B cell (primary cell): ENCODE measurements at regions of chr6 and their contacts with region 1.

Region 1: GRCh38 chr6:36885461-36886401 is at the start of gene C6orf89:
- DNase-seq: peak; percentile 98
- ATAC-seq: peak; percentile 99
- H3K4me3 ChIP-seq: peak within 1 kb of the TSS; percentile 68 to 89 (median 80)
- H3K4me3 Mint-ChIP-seq: peak within 1 kb of the TSS; percentile 90
- H3K27ac ChIP-seq: peak within 1 kb of the TSS; percentile 82 to 92
- H3K27ac Mint-ChIP-seq: peak within 1 kb of the TSS; percentile 92
- H3K4me1 ChIP-seq: peaks cover 17 to 22% of the 10 kb centered on the region in 2 donors
- H3K4me1 Mint-ChIP-seq: peaks cover 32% of the 10 kb centered on the region
- H3K27me3 ChIP-seq: no peaks in the 10 kb centered on the region
- H3K27me3 Mint-ChIP-seq: no peaks in the 10 kb centered on the region
- CTCF ChIP-seq: peak; percentile 86
- total RNA-seq, gene C6orf89: 34.2 and 35.3 TPM in 2 replicates

Region 2: DNA sequence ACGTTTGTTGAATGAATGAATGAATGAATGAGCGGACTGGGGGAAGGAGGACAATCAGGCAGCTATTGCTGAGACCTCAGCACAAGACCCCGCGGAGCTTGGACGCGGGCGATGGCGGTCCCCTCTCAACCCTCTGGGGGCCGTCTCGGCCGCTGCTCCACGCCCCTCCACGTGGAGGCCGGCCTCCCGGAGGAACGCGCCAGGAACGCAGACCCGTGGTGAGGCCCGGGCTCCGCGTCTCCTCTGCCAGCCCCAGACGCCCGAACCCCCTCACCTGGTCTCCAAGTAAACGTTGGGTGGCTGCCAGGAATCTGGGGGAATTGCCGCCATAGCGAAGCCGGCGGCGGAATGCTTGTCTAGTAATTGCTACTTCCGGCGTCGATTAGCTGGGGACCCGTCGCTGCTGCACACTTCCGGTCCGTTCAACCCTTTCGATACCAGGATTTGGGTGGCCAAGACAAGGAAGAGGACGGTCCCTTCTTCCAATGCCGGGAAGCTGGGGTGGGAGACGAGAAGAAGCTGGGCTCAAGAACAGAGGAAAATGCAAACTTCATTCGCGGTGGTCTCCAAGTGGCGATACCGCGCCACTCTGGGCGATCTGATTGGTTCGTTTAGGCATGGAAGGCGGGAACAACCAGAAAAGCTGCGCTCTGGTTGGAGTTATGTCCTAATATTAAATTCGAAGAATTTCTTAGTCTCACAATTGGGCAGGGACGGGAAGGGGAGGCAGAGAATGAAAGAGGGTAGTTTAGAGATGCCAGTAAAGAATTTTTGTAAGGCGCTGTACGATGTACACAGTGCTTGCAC is 11.1 kb before region 1 on chr6 and contains the start of gene PPIL1:
- CTCF ChIA-PET with region 1: interaction called, 72 read pairs
- POLR2A ChIA-PET with region 1: interaction called, 24 read pairs
- intact Hi-C with region 1: loop called (anchors 1 kb)
- DNase-seq: peak; percentile 96
- ATAC-seq: peak; percentile 93
- H3K4me3 ChIP-seq: peak within 1 kb of the TSS; percentile 73 to 100 (median 99)
- H3K4me3 Mint-ChIP-seq: peak within 1 kb of the TSS; percentile 99
- H3K27ac ChIP-seq: peak within 1 kb of the TSS; percentile 63 to 89
- H3K27ac Mint-ChIP-seq: peak within 1 kb of the TSS; percentile 97
- H3K4me1 ChIP-seq: peaks cover 12 to 15% of the 10 kb centered on the region in 2 donors
- H3K4me1 Mint-ChIP-seq: peaks cover 32% of the 10 kb centered on the region
- H3K27me3 ChIP-seq: peaks cover 0 to 3% (median under 1%) of the 10 kb centered on the region in 4 experiments
- H3K27me3 Mint-ChIP-seq: no peaks in the 10 kb centered on the region
- CTCF ChIP-seq: no peak
- total RNA-seq, gene PPIL1: 7.0 and 10.5 TPM in 2 replicates

Region 3: DNA sequence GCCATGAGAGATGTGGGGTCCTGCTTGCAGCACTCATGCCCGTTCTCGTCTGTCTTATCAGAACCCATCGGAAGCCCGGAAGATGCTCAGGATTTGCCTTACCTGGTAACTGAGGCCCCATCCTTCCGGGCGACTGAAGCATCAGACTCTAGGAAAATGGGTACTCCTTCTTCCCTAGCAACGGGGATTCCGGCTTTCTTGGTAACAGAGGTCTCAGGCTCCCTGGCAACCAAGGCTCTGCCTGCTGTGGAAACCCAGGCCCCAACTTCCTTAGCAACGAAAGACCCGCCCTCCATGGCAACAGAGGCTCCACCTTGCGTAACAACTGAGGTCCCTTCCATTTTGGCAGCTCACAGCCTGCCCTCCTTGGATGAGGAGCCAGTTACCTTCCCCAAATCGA is 77.1 kb after region 1 on chr6:
- CTCF ChIA-PET with region 1: interaction called, 3 read pairs
- POLR2A ChIA-PET with region 1: no interaction called
- intact Hi-C with region 1: loop called (anchors 1 kb)
- DNase-seq: peak; percentile 89
- ATAC-seq: peak; percentile 75
- H3K4me3 ChIP-seq: peak overlapping the region in 4 of 5 experiments; percentile 10 to 25 (median 20)
- H3K4me3 Mint-ChIP-seq: peak overlapping the region; percentile 75
- H3K27ac ChIP-seq: peak overlapping the region; percentile 58 to 61
- H3K27ac Mint-ChIP-seq: peak overlapping the region; percentile 92
- H3K4me1 ChIP-seq: peaks cover 22 to 30% of the 10 kb centered on the region in 2 donors
- H3K4me1 Mint-ChIP-seq: peaks cover 35% of the 10 kb centered on the region
- H3K27me3 ChIP-seq: no peaks in the 10 kb centered on the region
- H3K27me3 Mint-ChIP-seq: no peaks in the 10 kb centered on the region
- CTCF ChIP-seq: no peak

Region 4: GRCh38 chr6:36979347-36979742 is 93.6 kb after region 1 on chr6:
- CTCF ChIA-PET with region 1: interaction called, 12 read pairs
- POLR2A ChIA-PET with region 1: no interaction called
- intact Hi-C with region 1: no loop called
- DNase-seq: peak; percentile 42
- ATAC-seq: no peak
- H3K4me3 ChIP-seq: no peak overlapping the region
- H3K4me3 Mint-ChIP-seq: no peak overlapping the region
- H3K27ac ChIP-seq: no peak overlapping the region
- H3K27ac Mint-ChIP-seq: peak overlapping the region; percentile 47
- H3K4me1 ChIP-seq: peaks cover 16 to 17% of the 10 kb centered on the region in 2 donors
- H3K4me1 Mint-ChIP-seq: peaks cover 37% of the 10 kb centered on the region
- H3K27me3 ChIP-seq: no peaks in the 10 kb centered on the region
- H3K27me3 Mint-ChIP-seq: no peaks in the 10 kb centered on the region
- CTCF ChIP-seq: no peak

Region 5: GRCh38 chr6:36985808-36986703 is 100.3 kb after region 1 on chr6 and contains the start of gene MTCH1:
- CTCF ChIA-PET with region 1: interaction called, 4 read pairs
- POLR2A ChIA-PET with region 1: interaction called, 5 read pairs
- intact Hi-C with region 1: loop called (anchors 5 kb)
- DNase-seq: peak; percentile 96
- ATAC-seq: peak; percentile 88
- H3K4me3 ChIP-seq: peak within 1 kb of the TSS; percentile 66 to 98 (median 88)
- H3K4me3 Mint-ChIP-seq: peak within 1 kb of the TSS; percentile 96
- H3K27ac ChIP-seq: peak within 1 kb of the TSS; percentile 53 to 89
- H3K27ac Mint-ChIP-seq: peak within 1 kb of the TSS; percentile 98
- H3K4me1 ChIP-seq: peaks cover 33 to 35% of the 10 kb centered on the region in 2 donors
- H3K4me1 Mint-ChIP-seq: peaks cover 24% of the 10 kb centered on the region
- H3K27me3 ChIP-seq: no peaks in the 10 kb centered on the region
- H3K27me3 Mint-ChIP-seq: no peaks in the 10 kb centered on the region
- CTCF ChIP-seq: no peak
- total RNA-seq, gene MTCH1: 150 and 160 TPM in 2 replicates

Region 6: GRCh38 chr6:37177077-37177934 is 291.6 kb after region 1 on chr6:
- CTCF ChIA-PET with region 1: interaction called, 11 read pairs
- POLR2A ChIA-PET with region 1: no interaction called
- intact Hi-C with region 1: loop called (anchors 1 kb)
- DNase-seq: peak; percentile 86
- ATAC-seq: peak; percentile 74
- H3K4me3 ChIP-seq: peak overlapping the region in 2 of 5 experiments; percentile 12 to 25
- H3K4me3 Mint-ChIP-seq: peak overlapping the region; percentile 80
- H3K27ac ChIP-seq: no peak overlapping the region
- H3K27ac Mint-ChIP-seq: peak overlapping the region; percentile 83
- H3K4me1 ChIP-seq: peaks cover 56 to 58% of the 10 kb centered on the region in 2 donors
- H3K4me1 Mint-ChIP-seq: peaks cover 60% of the 10 kb centered on the region
- H3K27me3 ChIP-seq: no peaks in the 10 kb centered on the region
- H3K27me3 Mint-ChIP-seq: no peaks in the 10 kb centered on the region
- CTCF ChIP-seq: peak; percentile 36

Region 7: DNA sequence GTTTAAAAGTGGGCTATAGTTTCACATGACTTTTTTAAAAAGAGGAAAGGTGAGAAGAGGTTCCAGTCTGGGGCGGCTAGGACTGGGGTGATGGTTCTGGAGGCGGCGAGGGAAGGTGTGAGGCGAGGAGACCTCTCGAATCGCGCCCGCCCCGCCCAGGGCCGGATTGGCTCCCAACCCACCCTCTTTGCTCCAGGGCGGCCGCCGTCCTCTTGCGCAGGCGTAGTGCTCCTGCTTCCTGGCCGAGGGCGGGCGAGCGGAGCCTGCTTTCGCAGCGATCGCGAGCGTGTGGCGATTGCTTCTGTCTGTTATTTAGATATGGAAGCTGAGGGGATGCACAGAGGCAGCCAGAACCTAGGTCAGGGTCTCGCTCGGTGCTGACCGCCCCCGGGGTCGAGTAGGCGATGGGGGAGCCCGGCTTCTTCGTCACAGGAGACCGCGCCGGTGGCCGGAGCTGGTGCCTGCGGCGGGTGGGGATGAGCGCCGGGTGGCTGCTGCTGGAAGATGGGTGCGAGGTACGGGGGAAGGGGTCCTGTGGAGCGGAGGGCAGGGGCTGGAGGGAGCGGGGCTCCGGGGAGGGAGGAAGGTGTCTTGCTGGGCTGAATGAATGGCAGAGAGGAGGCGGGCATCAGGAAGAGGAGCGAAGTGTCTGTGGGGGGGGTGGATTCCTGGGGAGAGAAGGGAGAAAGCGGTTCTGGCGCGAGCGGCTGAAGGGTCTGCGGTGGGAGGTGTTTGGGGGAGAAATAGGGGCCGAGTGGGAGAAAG is 468.2 kb after region 1 on chr6 and contains the start of gene RNF8:
- CTCF ChIA-PET with region 1: no interaction called
- POLR2A ChIA-PET with region 1: no interaction called
- intact Hi-C with region 1: loop called (anchors 5 kb)
- DNase-seq: peak; percentile 90
- ATAC-seq: peak; percentile 98
- H3K4me3 ChIP-seq: peak within 1 kb of the TSS; percentile 44 to 98 (median 92)
- H3K4me3 Mint-ChIP-seq: peak within 1 kb of the TSS; percentile 96
- H3K27ac ChIP-seq: peak within 1 kb of the TSS; percentile 34 to 83
- H3K27ac Mint-ChIP-seq: peak within 1 kb of the TSS; percentile 87
- H3K4me1 ChIP-seq: peaks cover 11 to 13% of the 10 kb centered on the region in 2 donors
- H3K4me1 Mint-ChIP-seq: peaks cover 30% of the 10 kb centered on the region
- H3K27me3 ChIP-seq: no peaks in the 10 kb centered on the region
- H3K27me3 Mint-ChIP-seq: no peaks in the 10 kb centered on the region
- CTCF ChIP-seq: no peak
- total RNA-seq, gene RNF8: 16.9 and 18.8 TPM in 2 replicates